ENCODE measurements at regions of chr1 and their contacts with region 1.

Region 1: DNA sequence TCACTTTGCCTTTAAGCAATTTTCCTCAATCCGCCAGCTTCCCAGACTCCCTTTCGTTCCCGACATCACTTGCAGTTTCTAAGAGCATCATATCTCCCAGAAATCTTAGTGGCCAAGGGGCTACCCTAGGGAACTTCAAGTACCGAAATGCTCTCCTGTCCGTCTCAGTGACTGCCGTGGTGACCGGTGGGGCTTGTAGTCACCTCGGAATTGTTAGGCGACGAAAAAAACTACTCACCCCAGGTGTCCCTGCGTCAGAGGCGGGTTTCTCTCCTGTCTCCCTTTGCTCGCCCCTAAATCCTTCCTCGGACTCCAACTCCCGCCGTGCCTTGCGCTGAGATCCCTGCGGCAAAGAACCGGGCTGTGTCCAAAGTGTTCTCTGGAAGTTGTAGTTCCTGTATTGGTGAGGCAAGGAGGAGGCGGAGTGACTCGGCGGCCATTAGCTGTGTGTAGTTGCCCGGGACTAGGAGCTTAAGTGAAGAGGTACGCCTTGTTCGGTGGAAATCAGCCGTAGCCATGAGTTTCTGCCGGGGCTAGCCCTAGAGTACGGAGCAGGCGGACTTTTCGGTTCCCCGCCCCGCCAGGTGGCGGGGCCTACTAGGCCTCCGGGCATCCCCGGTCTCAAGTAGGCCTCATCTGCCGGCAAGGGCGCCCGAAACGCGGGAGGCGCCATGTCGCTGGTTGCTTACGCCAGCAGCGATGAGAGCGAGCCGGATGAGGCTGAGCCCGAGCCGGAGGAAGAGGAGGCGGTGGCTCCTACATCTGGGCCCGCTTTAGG is at the start of gene PRCC:
- DNase-seq: peak; percentile 99
- ATAC-seq: peak; percentile 92
- H3K4me3 ChIP-seq: peak within 1 kb of the TSS; percentile 74 to 95
- H3K27ac ChIP-seq: peak within 1 kb of the TSS; percentile 85
- H3K4me1 ChIP-seq: peaks cover 13 to 19% of the 10 kb centered on the region in 2 experiments
- H3K27me3 ChIP-seq: no peaks in the 10 kb centered on the region
- CTCF ChIP-seq: no peak
- POLR2A ChIP-seq: peak; percentile 47
- RAD21 ChIP-seq: peak; percentile 34; the same call in 1 of the 2 replicates
- total RNA-seq, gene PRCC: 78.1 TPM

Region 2: DNA sequence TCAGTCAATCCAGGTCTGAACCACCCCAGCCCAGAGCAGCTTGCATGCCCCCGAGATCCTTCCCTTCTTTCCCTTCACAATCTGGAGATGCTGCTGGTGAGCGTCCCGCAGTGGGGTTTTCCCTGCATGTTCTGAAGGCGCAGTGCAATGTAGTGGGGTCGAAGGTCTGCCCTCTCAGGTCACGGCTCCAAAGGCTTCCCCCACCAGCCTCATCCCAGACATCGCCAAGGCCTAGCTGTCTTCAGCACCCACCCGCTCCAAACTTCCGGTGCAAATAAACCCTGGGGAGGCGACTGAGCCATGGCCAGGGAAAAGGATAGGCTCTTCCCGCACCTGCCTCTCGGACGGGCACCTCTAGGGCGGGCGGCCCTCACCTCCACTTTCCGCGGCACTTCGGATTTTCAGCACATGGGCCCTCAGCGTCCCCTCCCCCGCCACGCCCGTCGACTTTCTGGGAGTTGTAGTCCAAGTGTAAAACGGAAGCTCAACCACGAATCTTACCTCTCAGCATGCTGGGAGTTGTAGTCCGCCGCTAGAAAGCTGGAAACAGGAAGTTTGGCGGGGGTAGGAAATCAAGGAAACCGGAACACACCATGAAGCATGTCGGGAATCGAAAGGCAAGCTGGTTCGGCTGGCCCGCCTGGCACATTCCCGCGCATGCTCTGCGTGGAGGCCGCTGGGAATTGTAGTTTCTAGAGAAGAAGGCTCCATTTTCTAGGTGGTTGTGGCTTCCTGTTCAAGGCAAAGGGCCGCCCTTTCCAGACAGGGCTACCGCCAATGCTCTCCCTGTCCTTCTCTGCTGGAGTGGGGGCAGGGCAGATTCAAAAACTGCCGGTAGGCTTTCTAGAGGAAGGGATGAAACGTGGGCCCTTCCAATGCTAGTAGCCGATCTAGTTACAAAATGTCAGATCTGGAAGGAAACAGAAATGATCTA is 26.3 kb before region 1 on chr1 and contains the start of gene MRPL24:
- CTCF ChIA-PET with region 1: interaction called, 7 read pairs
- POLR2A ChIA-PET with region 1: interaction called, 14 read pairs
- RAD21 ChIA-PET with region 1: interaction called, 5 read pairs
- intact Hi-C with region 1: loop called (anchors 1 kb)
- DNase-seq: peak; percentile 100
- ATAC-seq: peak; percentile 88
- H3K4me3 ChIP-seq: peak within 1 kb of the TSS; percentile 67 to 80
- H3K27ac ChIP-seq: peak within 1 kb of the TSS; percentile 84
- H3K4me1 ChIP-seq: peaks cover 14 to 29% of the 10 kb centered on the region in 2 experiments
- H3K27me3 ChIP-seq: no peaks in the 10 kb centered on the region
- CTCF ChIP-seq: no peak
- POLR2A ChIP-seq: peak; percentile 64
- RAD21 ChIP-seq: no peak
- total RNA-seq, gene MRPL24: 111 TPM

Region 3: DNA sequence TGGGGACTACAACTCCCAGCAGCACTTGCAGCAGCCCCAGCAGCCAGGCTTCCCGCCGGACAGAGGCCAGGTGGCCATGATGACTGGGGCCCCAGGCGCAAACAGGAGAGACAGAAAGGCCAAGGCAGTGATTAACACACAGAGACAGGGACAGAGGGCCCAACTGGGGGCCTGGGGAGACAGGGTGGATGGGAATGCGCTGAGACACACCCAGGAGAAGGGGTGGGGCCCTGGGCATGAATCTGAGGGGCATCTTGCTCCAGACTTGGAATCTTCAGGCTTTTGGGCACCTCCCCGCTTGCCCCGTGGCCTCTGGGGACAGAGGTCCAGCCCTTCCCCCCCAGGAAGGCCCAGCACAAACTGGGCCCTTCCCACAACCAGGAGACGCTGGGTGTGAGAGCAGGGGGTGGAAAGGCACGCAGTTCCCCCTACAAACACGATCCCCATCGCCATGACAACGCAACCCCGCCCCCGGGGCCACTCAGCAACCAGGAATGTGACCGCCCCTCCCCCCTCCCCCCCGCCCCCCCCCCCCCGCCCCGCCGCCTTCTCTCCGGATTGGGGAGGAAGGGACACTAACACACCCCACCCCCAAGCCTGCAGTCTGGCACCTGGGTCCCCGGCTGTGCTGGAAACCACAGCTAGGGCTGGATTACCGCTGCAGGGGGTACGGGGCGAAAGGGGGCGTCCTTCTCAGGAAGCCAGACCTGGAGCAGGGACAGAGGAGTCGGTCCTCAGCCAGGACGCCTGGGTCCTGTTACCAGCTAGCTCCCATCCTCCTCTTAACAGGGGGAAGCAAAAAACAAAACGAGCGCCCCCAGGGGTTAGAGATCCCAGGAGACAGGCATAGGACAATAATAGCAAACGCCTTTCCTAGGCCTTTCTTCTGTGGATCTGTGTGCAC is 20.3 kb before region 1 on chr1:
- CTCF ChIA-PET with region 1: interaction called, 5 read pairs
- POLR2A ChIA-PET with region 1: interaction called, 9 read pairs
- RAD21 ChIA-PET with region 1: interaction called in 1 of 2 experiments, 4 read pairs
- intact Hi-C with region 1: loop called (anchors 1 kb)
- DNase-seq: peak; percentile 61
- ATAC-seq: peak; percentile 47
- H3K4me3 ChIP-seq: peak overlapping the region; percentile 67 to 97
- H3K27ac ChIP-seq: peak overlapping the region; percentile 99
- H3K4me1 ChIP-seq: peaks cover 29 to 64% of the 10 kb centered on the region in 2 experiments
- H3K27me3 ChIP-seq: no peaks in the 10 kb centered on the region
- CTCF ChIP-seq: peak in 2 of 3 experiments; percentile 39 to 41; a peak in 3 of 6 replicates
- POLR2A ChIP-seq: no peak
- RAD21 ChIP-seq: no peak

Region 4: DNA sequence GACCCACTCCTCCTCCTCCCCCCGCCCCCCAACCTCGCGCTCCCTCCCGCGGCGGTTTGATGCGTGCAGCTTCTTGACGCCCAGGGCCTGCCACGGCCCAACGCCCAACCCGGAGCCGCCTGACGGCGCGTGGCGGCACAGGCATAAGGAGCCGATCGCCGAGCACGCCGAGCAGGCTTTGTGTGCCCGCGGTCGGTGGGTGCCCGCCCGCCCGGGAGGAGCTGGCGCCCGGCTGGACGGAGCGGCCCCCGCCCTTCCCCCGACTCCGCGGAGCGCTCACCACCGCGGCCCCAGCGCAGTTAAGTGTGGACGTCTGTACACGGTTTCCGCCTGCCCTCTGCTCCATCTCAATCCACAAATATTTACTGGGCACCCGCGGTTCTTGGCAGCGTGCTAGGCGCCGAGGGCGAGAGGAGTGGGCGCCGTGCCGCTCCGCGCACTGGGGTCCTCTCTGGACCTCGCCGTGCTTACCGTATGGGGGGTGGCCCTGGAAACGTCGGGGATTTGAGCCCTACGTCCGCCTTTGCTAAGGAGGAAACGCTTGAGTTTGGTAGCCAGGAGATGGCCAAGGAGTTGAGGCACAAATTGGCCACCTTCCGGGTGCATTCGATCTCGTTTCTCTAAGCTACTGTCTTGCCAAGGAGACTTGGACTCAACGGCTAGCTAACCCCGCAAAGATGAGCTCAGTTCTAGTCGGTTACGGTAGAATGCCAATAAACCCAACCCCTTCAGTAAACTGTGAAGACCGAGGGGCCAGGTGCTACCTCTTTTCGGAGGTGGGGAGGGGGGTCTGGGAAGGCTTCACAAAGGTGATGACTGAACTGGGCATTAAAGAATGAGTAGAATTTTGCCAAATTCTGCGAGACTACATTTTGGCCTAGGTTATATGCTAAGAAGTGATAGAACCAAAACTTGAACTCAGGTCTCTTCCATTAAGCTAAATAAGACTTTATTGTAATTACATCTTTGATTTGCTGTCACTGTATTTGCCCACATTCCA is 15.2 kb before region 1 on chr1:
- CTCF ChIA-PET with region 1: interaction called, 5 read pairs
- POLR2A ChIA-PET with region 1: interaction called, 9 read pairs
- RAD21 ChIA-PET with region 1: interaction called, 4 to 8 read pairs
- intact Hi-C with region 1: loop called (anchors 1 kb)
- DNase-seq: peak; percentile 90
- ATAC-seq: peak; percentile 65
- H3K4me3 ChIP-seq: peak overlapping the region; percentile 67 to 97
- H3K27ac ChIP-seq: peak overlapping the region; percentile 99
- H3K4me1 ChIP-seq: peaks cover 22 to 43% of the 10 kb centered on the region in 2 experiments
- H3K27me3 ChIP-seq: no peaks in the 10 kb centered on the region
- CTCF ChIP-seq: no peak
- POLR2A ChIP-seq: peak; percentile 49
- RAD21 ChIP-seq: no peak

Region 5: GRCh38 chr1:156852418-156852874 is 85.2 kb after region 1 on chr1:
- CTCF ChIA-PET with region 1: no interaction called
- POLR2A ChIA-PET with region 1: no interaction called
- RAD21 ChIA-PET with region 1: no interaction called
- intact Hi-C with region 1: no loop called
- DNase-seq: no peak
- ATAC-seq: 0 out of 2 replicates have a peak, but pooled peaks have one; percentile 26
- H3K4me3 ChIP-seq: no peak overlapping the region
- H3K27ac ChIP-seq: no peak overlapping the region
- H3K4me1 ChIP-seq: no peaks in the 10 kb centered on the region; a peak in 2 of 4 replicates
- H3K27me3 ChIP-seq: no peaks in the 10 kb centered on the region
- CTCF ChIP-seq: no peak
- POLR2A ChIP-seq: no peak
- RAD21 ChIP-seq: no peak

Measured in HCT116 (cell line).